ENCODE measurements at regions of chr10 and their contacts with region 1.

Region 1: DNA sequence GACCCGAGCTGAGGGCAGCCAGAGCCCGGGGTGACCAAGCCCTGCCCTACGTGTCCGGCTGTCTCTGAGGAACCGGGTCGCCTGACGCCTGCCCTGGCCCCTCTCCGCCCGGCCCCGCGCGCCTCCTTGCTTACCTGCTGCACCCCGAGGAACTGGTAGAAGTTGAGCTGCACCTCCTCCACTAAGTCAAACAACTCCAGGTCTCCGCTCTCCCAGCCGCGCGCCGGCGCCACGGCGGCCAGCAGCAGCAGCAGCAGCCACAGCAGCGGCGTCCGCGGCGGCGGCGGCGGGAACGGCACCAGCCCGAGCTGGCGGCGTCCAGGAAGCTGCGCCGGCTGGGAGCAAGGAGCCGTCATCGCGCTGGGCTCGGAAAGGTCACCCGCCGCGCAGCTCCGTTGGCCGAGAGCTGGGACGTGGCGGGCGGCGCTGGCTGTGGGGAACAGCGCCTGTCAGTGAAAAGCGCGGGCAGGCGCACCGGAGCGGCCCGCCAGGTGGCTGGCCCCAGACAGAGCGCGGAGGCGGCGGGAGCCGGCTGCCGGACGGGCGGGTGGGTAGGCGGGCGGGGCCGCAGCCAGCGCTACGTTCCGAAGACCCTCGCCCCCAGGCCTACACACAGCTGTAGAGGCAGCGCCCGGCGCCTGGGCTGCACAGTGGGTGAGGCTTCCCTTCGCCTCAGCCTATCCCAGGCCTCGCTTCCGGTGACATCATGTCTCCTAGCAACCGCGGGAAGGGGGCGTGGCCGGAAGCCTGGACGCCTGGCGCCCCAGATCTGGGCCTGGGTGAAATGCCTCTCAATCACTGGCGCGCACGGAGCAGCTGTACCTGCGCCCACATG is at the start of gene DNAJC1:
- DNase-seq: peak; percentile 97
- ATAC-seq: peak; percentile 93
- H3K4me3 ChIP-seq: peak within 1 kb of the TSS; percentile 57 to 90 (median 79)
- H3K4me3 Mint-ChIP-seq: peak within 1 kb of the TSS; percentile 90
- H3K27ac ChIP-seq: peak within 1 kb of the TSS; percentile 84
- H3K27ac Mint-ChIP-seq: peak within 1 kb of the TSS; percentile 91
- H3K4me1 ChIP-seq: peaks cover 30 to 31% of the 10 kb centered on the region in 2 donors
- H3K4me1 Mint-ChIP-seq: peaks cover 40% of the 10 kb centered on the region
- H3K27me3 ChIP-seq: no peaks in the 10 kb centered on the region
- H3K27me3 Mint-ChIP-seq: no peaks in the 10 kb centered on the region
- CTCF ChIP-seq: peak; percentile 31
- total RNA-seq, gene DNAJC1: 15.4 and 16.1 TPM in 2 replicates

Region 2: GRCh38 chr10:21473135-21473534 is 530.2 kb before region 1 on chr10:
- CTCF ChIA-PET with region 1: no interaction called
- POLR2A ChIA-PET with region 1: interaction called, 18 read pairs
- intact Hi-C with region 1: no loop called
- DNase-seq: no peak
- ATAC-seq: no peak
- H3K4me3 ChIP-seq: no peak overlapping the region
- H3K4me3 Mint-ChIP-seq: no peak overlapping the region
- H3K27ac ChIP-seq: no peak overlapping the region
- H3K27ac Mint-ChIP-seq: no peak overlapping the region
- H3K4me1 ChIP-seq: no peaks in the 10 kb centered on the region
- H3K4me1 Mint-ChIP-seq: no peaks in the 10 kb centered on the region
- H3K27me3 ChIP-seq: no peaks in the 10 kb centered on the region
- H3K27me3 Mint-ChIP-seq: peaks cover 5% of the 10 kb centered on the region
- CTCF ChIP-seq: no peak

Region 3: DNA sequence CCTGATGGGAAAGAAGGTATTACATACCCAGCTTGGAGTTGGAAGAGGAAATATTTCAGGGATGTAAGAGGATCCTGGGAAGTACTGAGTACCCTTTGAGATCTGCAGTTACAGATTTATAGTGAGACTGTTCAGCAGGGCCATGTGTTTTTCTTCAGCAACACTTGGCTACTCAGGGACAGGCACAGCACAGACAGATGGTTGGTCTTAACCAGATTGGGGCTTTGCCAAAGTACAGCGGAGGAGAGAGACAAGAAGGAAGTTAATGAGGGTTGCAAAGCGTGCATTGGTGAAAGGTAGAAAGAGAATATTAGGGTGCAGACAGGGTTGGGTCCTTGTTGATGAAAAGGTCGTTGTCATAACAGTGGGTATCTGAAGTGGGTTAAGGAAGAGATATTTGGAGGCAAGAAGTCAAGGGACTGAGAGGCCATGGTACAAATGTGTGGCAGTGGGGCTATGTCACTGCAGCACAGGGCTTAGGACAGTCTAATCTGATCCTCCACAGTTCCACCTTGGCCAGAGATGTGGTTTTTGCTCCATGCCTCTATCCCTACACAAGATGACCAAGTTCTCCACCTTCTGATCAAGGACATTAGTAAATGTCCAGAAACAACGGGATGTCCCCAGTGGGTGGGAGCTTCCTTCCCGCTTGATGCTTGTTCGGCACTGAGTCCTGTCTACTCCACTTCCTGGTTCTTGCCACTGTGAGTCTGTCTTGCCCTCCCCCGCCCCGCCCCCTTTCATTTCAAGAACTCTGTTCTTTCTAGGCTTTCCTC is 19.1 kb after region 1 on chr10:
- CTCF ChIA-PET with region 1: no interaction called
- POLR2A ChIA-PET with region 1: no interaction called
- intact Hi-C with region 1: no loop called
- DNase-seq: peak; percentile 48
- ATAC-seq: peak; percentile 68
- H3K4me3 ChIP-seq: peak overlapping the region in 4 of 5 experiments; percentile 12 to 50 (median 38)
- H3K4me3 Mint-ChIP-seq: peak overlapping the region; percentile 80
- H3K27ac ChIP-seq: peak overlapping the region; percentile 7 to 35
- H3K27ac Mint-ChIP-seq: peak overlapping the region; percentile 59
- H3K4me1 ChIP-seq: peaks cover 5 to 10% of the 10 kb centered on the region in 2 donors
- H3K4me1 Mint-ChIP-seq: peaks cover 14% of the 10 kb centered on the region
- H3K27me3 ChIP-seq: no peaks in the 10 kb centered on the region
- H3K27me3 Mint-ChIP-seq: peaks cover 8% of the 10 kb centered on the region
- CTCF ChIP-seq: no peak

Region 4: DNA sequence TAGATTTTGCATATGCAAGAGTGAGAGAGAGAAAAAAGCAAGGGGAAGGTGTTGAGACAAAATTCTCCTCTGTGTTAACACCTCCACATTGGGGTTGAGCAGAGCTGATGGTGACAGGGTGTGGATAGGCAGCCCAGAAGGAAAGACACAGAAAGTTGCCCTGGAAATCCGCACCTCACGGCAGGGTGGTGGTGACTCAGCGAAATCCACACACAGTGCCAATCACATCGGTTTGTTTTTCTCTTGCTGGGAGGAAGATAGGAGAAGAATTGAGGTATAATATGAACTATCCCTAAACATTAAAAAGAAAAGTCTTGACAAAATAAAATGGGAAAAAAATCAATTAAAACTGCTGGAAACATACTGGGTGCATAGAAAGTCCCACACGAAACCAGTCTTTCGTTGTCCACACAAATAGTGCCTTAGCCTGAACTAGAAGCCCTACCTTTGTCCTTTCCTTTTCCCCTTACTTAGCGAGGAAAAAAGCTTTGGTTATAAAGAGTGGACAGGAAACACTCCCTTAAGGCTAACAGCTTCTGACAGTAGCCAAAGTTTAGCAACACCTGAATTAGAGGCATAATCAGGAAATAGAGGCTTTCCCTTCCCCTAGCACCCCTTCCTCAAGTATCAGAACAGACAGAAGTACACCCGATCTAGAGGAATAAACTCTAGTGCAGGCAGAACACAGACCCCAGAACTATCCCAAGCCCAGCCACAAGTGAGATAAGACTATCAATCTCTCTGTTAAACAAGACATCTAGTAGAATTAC is 39.4 kb after region 1 on chr10:
- CTCF ChIA-PET with region 1: no interaction called
- POLR2A ChIA-PET with region 1: no interaction called
- intact Hi-C with region 1: no loop called
- DNase-seq: no peak
- ATAC-seq: no peak
- H3K4me3 ChIP-seq: no peak overlapping the region
- H3K4me3 Mint-ChIP-seq: no peak overlapping the region
- H3K27ac ChIP-seq: no peak overlapping the region
- H3K27ac Mint-ChIP-seq: no peak overlapping the region
- H3K4me1 ChIP-seq: no peaks in the 10 kb centered on the region
- H3K4me1 Mint-ChIP-seq: no peaks in the 10 kb centered on the region
- H3K27me3 ChIP-seq: peaks cover 0 to 18% (median 4%) of the 10 kb centered on the region in 4 experiments
- H3K27me3 Mint-ChIP-seq: peaks cover 37% of the 10 kb centered on the region
- CTCF ChIP-seq: no peak

Region 5: DNA sequence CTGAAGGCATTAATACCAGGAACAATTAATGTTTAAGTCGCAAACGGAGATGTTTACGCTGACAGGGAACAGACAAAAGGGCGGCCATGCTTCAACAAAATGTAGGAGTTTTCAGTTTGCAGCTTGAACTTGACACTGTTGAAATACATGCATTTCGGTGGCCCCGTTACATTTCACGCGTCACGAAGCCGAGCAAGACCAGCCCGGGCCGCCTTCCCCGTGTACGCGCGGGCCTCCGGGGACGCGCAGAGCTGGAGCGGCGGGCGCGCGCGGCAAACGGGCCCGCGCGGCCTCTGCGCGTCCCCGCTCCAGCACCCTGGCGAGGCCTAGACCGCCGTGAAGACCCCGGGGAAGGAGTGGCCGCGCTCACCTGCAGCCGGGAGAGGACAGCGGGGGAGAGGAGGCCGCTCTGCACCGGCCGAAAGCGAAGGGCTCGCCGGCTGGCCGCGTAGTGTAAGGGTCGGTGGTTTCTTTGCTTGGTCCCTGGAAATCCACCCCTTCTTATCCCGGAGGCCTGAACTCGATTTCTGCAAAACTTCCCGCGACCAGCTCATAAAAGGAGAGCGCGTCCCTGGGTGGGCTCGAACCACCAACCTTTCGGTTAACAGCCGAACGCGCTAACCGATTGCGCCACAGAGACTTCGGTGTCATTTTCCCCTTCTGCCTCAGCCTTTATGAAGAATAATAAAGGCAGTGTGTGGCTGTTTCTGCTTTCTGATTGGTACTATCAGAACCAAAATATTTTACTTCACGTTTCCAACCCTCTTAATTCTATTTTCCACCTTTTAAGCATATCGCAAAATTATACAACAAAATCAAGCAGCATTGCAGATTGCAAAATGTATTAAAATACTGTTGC is 225.9 kb after region 1 on chr10:
- CTCF ChIA-PET with region 1: interaction called, 4 read pairs
- POLR2A ChIA-PET with region 1: interaction called, 10 read pairs
- intact Hi-C with region 1: loop called (anchors 1 kb)
- DNase-seq: peak; percentile 96
- ATAC-seq: peak; percentile 81
- H3K4me3 ChIP-seq: peak overlapping the region; percentile 68 to 83 (median 81)
- H3K4me3 Mint-ChIP-seq: peak overlapping the region; percentile 90
- H3K27ac ChIP-seq: peak overlapping the region; percentile 66 to 77
- H3K27ac Mint-ChIP-seq: peak overlapping the region; percentile 100
- H3K4me1 ChIP-seq: no peaks in the 10 kb centered on the region
- H3K4me1 Mint-ChIP-seq: peaks cover 14% of the 10 kb centered on the region
- H3K27me3 ChIP-seq: no peaks in the 10 kb centered on the region
- H3K27me3 Mint-ChIP-seq: peaks cover 7% of the 10 kb centered on the region
- CTCF ChIP-seq: no peak

Region 6: GRCh38 chr10:22340362-22341189 is 337.3 kb after region 1 on chr10:
- CTCF ChIA-PET with region 1: interaction called, 3 read pairs
- POLR2A ChIA-PET with region 1: interaction called, 6 read pairs
- intact Hi-C with region 1: loop called (anchors 1 kb)
- DNase-seq: peak; percentile 92
- ATAC-seq: peak; percentile 62
- H3K4me3 ChIP-seq: peak overlapping the region; percentile 62 to 79 (median 73)
- H3K4me3 Mint-ChIP-seq: peak overlapping the region; percentile 94
- H3K27ac ChIP-seq: peak overlapping the region; percentile 70 to 81
- H3K27ac Mint-ChIP-seq: peak overlapping the region; percentile 94
- H3K4me1 ChIP-seq: peaks cover 38 to 72% of the 10 kb centered on the region in 2 donors
- H3K4me1 Mint-ChIP-seq: peaks cover 31% of the 10 kb centered on the region
- H3K27me3 ChIP-seq: peaks cover 11 to 86% (median 73%) of the 10 kb centered on the region in 4 experiments
- H3K27me3 Mint-ChIP-seq: peaks cover 58% of the 10 kb centered on the region
- CTCF ChIP-seq: no peak

Region 7: DNA sequence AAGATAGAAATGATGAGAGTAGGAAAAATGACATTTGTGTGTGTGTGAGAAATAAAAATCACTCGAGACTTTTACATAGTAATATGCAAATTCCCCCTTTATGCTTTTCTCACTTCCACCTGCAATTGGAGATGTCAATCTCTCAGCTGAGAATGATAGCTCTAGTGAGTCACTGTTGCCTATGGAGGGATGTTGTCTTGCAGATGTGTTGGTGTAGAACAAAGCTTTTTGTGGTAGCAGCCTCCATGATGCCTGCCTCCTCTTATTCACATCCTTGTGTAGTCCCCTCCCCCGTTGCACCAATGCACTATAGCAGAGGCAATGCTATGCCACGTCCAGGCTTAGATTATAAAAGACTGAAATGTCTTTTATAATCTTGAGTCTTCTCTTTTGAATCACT is 375.8 kb after region 1 on chr10:
- CTCF ChIA-PET with region 1: no interaction called
- POLR2A ChIA-PET with region 1: no interaction called
- intact Hi-C with region 1: no loop called
- DNase-seq: no peak
- ATAC-seq: peak; percentile 36
- H3K4me3 ChIP-seq: no peak overlapping the region
- H3K4me3 Mint-ChIP-seq: no peak overlapping the region
- H3K27ac ChIP-seq: no peak overlapping the region
- H3K27ac Mint-ChIP-seq: no peak overlapping the region
- H3K4me1 ChIP-seq: peaks cover 0 to 12% of the 10 kb centered on the region in 2 donors
- H3K4me1 Mint-ChIP-seq: peaks cover 18% of the 10 kb centered on the region
- H3K27me3 ChIP-seq: no peaks in the 10 kb centered on the region
- H3K27me3 Mint-ChIP-seq: peaks cover 4% of the 10 kb centered on the region
- CTCF ChIP-seq: no peak

Region 8: GRCh38 chr10:22714479-22715289 is 711.4 kb after region 1 on chr10 and contains the start of gene PIP4K2A:
- CTCF ChIA-PET with region 1: no interaction called
- POLR2A ChIA-PET with region 1: no interaction called
- intact Hi-C with region 1: loop called (anchors 5 kb)
- DNase-seq: peak; percentile 87
- ATAC-seq: peak; percentile 81
- H3K4me3 ChIP-seq: peak within 1 kb of the TSS; percentile 70 to 92 (median 90)
- H3K4me3 Mint-ChIP-seq: peak within 1 kb of the TSS; percentile 91
- H3K27ac ChIP-seq: peak within 1 kb of the TSS; percentile 78 to 85
- H3K27ac Mint-ChIP-seq: peak within 1 kb of the TSS; percentile 89
- H3K4me1 ChIP-seq: peaks cover 31 to 38% of the 10 kb centered on the region in 2 donors
- H3K4me1 Mint-ChIP-seq: peaks cover 37% of the 10 kb centered on the region
- H3K27me3 ChIP-seq: no peaks in the 10 kb centered on the region
- H3K27me3 Mint-ChIP-seq: no peaks in the 10 kb centered on the region
- CTCF ChIP-seq: no peak
- total RNA-seq, gene PIP4K2A: 100 and 103 TPM in 2 replicates

Region 9: DNA sequence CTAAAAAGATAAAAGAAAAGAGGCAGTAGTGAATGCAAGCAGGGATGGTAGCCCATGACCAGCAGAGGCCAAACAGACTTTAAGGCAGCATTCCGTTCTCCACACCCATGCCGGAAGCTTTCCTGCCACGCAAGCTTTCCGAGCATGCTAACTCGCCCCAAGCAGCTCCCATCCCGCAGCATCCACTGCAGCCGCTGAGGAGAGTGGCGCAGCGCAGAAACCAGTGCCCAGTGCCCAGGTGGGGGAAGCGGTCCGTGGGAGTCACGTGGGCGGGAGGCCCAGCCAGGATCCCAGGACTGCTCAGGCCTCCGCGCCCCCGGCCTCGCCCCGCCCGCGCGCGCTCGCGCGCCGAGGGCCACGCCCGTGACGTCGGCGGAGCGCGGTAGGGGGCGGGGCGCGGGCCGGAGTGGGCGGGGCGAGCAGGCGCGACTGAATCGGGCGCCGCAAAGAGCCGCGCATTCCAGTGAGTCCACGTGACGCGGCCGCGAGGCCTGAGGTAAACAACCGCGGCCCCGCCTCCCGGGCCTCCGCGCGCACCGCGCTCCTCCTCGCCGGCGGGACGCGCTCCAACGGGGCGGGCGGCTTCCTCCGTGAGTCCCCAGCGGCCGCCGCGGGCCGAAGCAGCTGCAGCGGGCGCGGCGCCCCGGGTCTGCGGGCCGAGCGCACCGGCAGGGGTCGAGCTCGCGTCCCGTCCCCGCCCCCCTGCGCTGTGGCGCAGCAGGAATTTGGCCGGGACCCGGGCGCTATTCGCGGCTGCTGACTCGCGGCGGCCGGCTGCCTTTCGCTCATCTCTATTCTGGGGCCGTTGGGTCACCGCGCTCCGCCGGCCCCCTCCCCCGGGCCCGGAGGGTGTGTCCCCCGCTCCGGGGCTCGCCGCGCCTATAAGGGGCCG is 1435.5 kb after region 1 on chr10 and contains the start of gene OTUD1:
- CTCF ChIA-PET with region 1: no interaction called
- POLR2A ChIA-PET with region 1: interaction called, 9 read pairs
- intact Hi-C with region 1: loop called (anchors 2 kb)
- DNase-seq: peak; percentile 98
- ATAC-seq: peak; percentile 80
- H3K4me3 ChIP-seq: peak within 1 kb of the TSS; percentile 70 to 93 (median 87)
- H3K4me3 Mint-ChIP-seq: peak within 1 kb of the TSS; percentile 98
- H3K27ac ChIP-seq: peak within 1 kb of the TSS; percentile 83 to 92
- H3K27ac Mint-ChIP-seq: peak within 1 kb of the TSS; percentile 96
- H3K4me1 ChIP-seq: peaks cover 30 to 40% of the 10 kb centered on the region in 2 donors
- H3K4me1 Mint-ChIP-seq: peaks cover 49% of the 10 kb centered on the region
- H3K27me3 ChIP-seq: no peaks in the 10 kb centered on the region
- H3K27me3 Mint-ChIP-seq: no peaks in the 10 kb centered on the region
- CTCF ChIP-seq: no peak
- total RNA-seq, gene OTUD1: 66.3 and 69.0 TPM in 2 replicates